ENCODE measurements at regions of chr16 and their contacts with region 1.

Region 1: GRCh38 chr16:30747799-30748634 is at the start of gene PHKG2:
- DNase-seq: peak; percentile 100

Region 2: GRCh38 chr16:30621765-30622164 is 126.3 kb before region 1 on chr16:
- CTCF ChIA-PET with region 1: no interaction called
- POLR2A ChIA-PET with region 1: no interaction called
- DNase-seq: no peak

Region 3: GRCh38 chr16:30665161-30665829 is 82.7 kb before region 1 on chr16:
- CTCF ChIA-PET with region 1: no interaction called
- POLR2A ChIA-PET with region 1: no interaction called
- DNase-seq: no peak

Region 4: GRCh38 chr16:30724641-30725417 is 23.2 kb before region 1 on chr16:
- CTCF ChIA-PET with region 1: no interaction called
- POLR2A ChIA-PET with region 1: interaction called, 43 read pairs
- DNase-seq: no peak

Region 5: GRCh38 chr16:30767767-30768415 is 19.9 kb after region 1 on chr16:
- CTCF ChIA-PET with region 1: no interaction called
- POLR2A ChIA-PET with region 1: interaction called, 13 read pairs
- DNase-seq: no peak

Region 6: DNA sequence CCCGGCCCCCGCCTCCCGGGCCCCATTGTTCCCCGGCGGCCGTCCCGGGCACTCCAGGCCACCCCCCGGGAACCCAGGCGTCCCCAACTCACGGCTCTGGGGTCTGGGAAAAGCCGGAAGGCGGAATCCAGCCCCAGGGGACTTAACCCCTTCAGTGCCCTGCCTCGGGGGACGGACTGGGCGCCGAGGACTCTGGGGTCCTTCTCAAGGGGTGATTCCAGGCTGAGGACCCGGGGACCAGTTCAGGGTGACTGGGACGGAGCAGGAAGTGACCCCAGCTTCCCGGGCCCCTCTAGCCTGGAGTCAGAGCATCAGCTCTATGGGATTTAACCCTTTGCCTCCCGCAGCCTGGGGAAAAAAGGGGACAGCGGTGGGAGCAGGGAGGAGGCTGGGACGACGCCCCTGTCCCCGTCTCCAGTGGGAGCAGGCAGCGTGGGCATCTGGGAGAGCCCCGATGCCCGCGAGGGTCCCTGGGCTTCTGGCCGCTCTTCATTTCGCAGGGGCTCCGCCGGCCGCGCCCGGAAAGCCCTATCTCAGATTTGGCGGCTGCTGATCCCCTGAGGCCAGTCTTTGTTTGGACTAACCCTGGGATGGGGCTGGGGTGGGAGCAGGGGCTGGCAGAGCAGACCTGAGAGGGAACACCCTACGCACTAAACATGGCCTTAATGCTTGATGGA is 39.1 kb after region 1 on chr16 and contains the start of gene ZNF629:
- CTCF ChIA-PET with region 1: no interaction called
- POLR2A ChIA-PET with region 1: interaction called, 11 read pairs
- DNase-seq: peak; percentile 86

Region 7: GRCh38 chr16:30874821-30875717 is 127.1 kb after region 1 on chr16:
- CTCF ChIA-PET with region 1: no interaction called
- POLR2A ChIA-PET with region 1: interaction called, 14 read pairs
- DNase-seq: peak; percentile 97

Measured in HEK293T (cell line).